Ovary (tissue), 10 donors: ENCODE measurements at regions of chr6 and their contacts with region 1.

Region 1: GRCh38 chr6:81625216-81625615 is 127.3 kb downstream of the TENT5A start:
- DNase-seq: no peak
- H3K4me3 ChIP-seq: no peak overlapping the region
- H3K27ac ChIP-seq: no peak overlapping the region
- H3K4me1 ChIP-seq: no peaks in the 10 kb centered on the region
- H3K27me3 ChIP-seq: no peaks in the 10 kb centered on the region
- CTCF ChIP-seq: no peak
- EP300 ChIP-seq: no peak
- POLR2A ChIP-seq: no peak

Region 2: DNA sequence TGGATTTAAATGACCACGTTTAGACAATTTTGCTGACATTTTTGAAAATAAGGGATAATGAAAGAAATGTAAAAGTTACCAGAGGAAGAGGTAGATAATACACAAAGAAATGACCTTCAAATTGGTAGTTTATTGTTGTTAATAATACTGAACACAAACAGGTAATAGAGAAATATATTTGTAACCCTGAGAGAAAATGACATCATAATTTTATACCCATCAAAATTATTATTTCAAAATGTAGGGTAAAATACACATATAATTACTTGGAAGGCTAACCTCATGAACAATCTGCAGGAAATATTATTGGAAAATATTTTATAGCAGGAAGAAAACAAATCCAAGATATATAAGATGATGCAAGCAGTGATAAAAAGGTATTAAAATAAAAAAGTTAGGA is 444.6 kb before region 1 on chr6:
- intact Hi-C with region 1: no loop called
- DNase-seq: no peak
- H3K4me3 ChIP-seq: no peak overlapping the region
- H3K27ac ChIP-seq: no peak overlapping the region
- H3K4me1 ChIP-seq: no peaks in the 10 kb centered on the region
- H3K27me3 ChIP-seq: no peaks in the 10 kb centered on the region
- CTCF ChIP-seq: no peak
- EP300 ChIP-seq: no peak
- POLR2A ChIP-seq: no peak

Region 3: DNA sequence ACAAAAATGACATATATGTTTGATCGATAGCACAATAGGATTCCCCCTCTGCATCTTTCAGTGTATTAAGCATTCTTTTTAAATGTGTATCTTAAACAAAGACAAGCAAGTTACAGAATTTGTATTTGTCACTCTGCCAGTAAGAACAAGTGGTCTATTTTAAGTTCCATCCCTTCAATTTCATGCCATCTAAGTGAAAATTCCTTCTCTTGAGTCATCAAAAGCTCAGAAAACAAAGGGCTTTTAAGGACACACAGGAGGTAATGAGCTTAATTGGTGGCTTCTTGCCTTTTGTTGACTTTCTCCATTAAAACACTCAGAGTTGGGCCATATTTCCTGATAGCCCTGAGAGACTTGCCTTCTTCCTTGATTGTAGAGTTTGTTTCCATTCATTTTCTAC is 420.5 kb before region 1 on chr6:
- intact Hi-C with region 1: loop called in 1 of 4 experiments (anchors 10 kb)
- DNase-seq: no peak
- H3K4me3 ChIP-seq: no peak overlapping the region
- H3K27ac ChIP-seq: no peak overlapping the region
- H3K4me1 ChIP-seq: no peaks in the 10 kb centered on the region
- H3K27me3 ChIP-seq: no peaks in the 10 kb centered on the region
- CTCF ChIP-seq: no peak
- EP300 ChIP-seq: no peak
- POLR2A ChIP-seq: no peak

Region 4: GRCh38 chr6:81293946-81294637 is 331.1 kb before region 1 on chr6:
- intact Hi-C with region 1: no loop called
- DNase-seq: no peak
- H3K4me3 ChIP-seq: no peak overlapping the region
- H3K27ac ChIP-seq: no peak overlapping the region
- H3K4me1 ChIP-seq: no peaks in the 10 kb centered on the region
- H3K27me3 ChIP-seq: no peaks in the 10 kb centered on the region
- CTCF ChIP-seq: no peak
- EP300 ChIP-seq: no peak
- POLR2A ChIP-seq: no peak

Region 5: GRCh38 chr6:81531869-81532561 is 93.2 kb before region 1 on chr6:
- intact Hi-C with region 1: no loop called
- DNase-seq: no peak
- H3K4me3 ChIP-seq: no peak overlapping the region
- H3K27ac ChIP-seq: no peak overlapping the region
- H3K4me1 ChIP-seq: no peaks in the 10 kb centered on the region
- H3K27me3 ChIP-seq: no peaks in the 10 kb centered on the region
- CTCF ChIP-seq: no peak
- EP300 ChIP-seq: no peak
- POLR2A ChIP-seq: no peak

Region 6: DNA sequence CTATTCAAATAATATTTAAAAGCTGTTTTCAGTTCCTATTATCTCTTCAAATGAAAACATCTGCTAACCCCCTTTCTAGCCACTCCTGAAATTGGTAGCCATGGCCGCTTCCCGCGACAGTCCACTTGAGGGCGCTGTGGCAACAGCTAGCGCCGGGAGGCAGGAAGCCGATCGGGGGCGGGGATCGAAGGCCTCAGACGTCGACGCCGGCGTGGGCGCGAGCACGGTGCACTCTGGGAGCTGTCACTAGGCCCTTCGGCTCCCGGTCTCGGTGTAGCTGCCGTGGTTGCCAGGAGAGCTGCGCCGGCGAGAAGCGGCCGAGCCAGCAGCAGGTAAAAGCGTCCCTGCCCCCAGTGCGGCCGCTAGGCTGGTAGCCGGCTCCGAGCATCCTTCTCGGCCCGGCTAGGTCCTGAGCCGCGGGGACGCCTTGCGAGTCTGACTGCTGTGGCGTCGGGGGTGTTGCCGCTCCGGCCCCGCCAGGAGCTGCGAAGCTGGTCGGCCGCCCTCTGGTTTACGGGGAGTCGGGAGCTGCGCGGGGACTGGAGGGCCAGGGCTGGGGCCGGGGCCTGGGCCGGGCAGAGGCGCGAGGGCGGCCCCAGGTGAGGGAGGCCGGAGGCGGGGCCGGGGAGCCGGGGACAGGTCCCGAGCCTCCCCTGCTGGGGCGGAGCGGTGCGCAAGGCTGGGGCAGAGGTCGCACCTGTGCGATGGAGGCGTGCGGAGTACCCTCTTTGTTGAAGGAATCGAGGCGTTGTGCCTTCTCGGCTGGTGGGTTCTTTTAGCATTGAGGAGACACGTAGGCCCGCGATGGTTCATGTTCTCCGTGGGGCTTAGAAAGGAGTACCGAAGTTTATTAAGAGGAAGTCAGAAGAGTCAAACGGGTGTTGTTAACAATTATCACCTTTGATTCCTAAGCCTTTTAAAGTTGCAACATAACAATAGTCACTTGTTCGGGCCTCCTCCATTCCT is 1442.5 kb after region 1 on chr6 and contains the start of gene DOP1A:
- intact Hi-C with region 1: no loop called
- DNase-seq: peak; percentile 92 to 96 (median 95)
- H3K4me3 ChIP-seq: peak within 1 kb of the TSS; percentile 95
- H3K27ac ChIP-seq: peak within 1 kb of the TSS; percentile 76 to 77
- H3K4me1 ChIP-seq: peaks cover 2% of the 10 kb centered on the region
- H3K27me3 ChIP-seq: no peaks in the 10 kb centered on the region
- CTCF ChIP-seq: peak; percentile 85 to 99 (median 90)
- EP300 ChIP-seq: no peak
- POLR2A ChIP-seq: peak; percentile 46
- total RNA-seq, gene DOP1A: 24.3 to 32.9 (median 28.5) TPM